ENCODE measurements at regions of chr6 and their contacts with region 1.

Region 1: DNA sequence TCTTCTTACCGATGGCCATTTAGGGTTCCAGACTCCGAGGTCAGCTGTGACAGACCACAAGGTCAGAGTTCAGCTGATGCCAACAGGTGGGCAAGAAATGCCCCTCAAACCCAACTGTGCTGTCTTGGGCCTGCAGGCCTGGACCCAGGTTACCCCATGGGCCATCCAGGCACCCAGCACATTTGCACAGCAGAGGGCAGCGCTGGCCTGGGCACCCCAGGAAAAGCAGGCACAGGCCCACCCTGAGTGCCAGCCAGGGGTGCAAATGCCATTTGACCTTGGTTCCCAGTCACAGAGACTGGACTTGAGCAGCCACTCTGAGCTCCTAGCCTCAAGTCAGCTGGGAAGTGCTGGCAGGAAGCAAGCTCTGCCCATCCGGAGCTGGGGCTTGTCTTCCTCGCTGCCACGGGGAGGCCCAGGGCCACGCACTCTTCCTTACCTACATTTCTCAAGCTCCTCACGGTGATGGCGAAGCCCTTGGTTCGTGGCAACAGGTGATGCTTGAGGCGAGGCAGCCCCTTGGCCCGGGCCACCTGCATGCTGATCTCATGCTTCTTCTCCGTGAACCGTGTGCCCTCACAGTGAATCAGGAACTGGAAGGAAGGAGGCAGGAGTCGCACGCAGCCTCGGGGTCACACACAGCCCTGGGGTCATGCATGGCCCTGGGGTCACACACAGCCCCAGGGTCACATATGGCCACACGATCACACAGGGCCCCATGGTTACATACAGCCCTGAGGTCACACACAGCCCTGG is 120.8 kb downstream of the AGPAT4 start:
- DNase-seq: no peak
- ATAC-seq: peak; percentile 27

Region 2: DNA sequence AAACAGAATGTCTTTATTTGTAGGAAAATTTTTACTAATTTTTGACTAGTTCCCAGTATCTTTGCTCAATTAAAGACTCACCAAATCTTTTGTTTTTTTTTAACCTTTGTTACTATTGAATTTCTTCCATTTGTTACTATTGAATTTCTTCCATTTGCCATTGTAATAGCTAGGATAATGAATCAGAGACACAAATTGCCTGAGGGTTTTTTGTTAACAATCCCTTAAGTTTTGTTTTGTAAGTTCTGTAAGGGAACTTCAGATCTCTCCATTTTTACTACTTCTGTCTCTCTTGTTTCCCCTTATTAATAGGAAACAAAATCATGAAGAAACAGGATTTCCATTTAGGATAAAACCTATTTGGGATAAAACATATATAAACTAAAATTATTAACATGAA is 57.2 kb before region 1 on chr6:
- intact Hi-C with region 1: loop called (anchors 2 kb)
- DNase-seq: no peak
- ATAC-seq: no peak

Region 3: GRCh38 chr6:161273752-161274487 is 120.8 kb after region 1 on chr6 and contains the start of gene AGPAT4:
- intact Hi-C with region 1: no loop called
- DNase-seq: no peak
- ATAC-seq: peak; percentile 99
- total RNA-seq, gene AGPAT4: 2.4 TPM